ENCODE measurements at regions of chr7 and their contacts with region 1.

Region 1: DNA sequence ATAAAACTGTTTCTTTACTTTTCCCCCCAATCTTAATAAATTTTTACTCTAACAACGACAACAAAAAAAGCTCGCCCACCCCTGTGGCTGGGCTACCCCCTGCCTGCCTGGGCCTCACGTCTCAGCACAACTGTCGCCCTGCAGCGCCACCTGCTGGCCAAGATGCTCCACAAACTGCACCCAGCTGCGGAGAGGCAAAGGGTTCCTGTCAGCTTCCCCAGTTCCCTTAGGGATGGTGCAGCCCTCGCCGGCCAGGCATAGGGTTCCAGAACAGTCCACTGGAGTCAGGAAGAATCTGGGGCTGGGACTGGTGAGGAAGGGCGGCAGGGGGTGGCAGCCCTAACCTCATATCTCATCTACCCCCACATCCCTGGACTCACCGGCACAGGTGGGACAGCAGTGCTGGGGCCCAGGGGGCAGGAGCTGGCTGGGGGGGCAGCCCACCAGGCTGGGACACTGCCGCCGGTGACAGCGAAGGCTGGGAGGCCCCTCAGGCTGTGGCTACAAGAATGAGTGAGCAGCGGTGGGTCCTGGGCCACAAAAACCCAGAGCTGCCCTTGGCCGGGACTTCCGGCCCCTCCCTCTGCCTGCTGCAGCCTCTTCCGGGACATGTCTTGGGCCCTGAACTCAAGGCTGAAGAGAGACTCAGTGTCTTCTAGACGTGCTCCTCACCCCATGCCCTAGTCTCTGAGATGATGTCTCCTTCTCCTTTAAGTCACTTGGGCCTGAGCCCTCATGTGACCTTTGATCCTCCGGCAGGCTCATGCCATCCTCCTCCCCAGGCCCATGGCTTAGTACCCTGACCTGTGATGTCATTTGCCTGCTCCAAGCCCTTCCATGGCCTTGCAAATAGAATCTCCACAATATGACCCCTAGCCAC is 21.2 kb downstream of the ATP6V1F start:
- DNase-seq: peak; percentile 76 to 89 (median 84)
- H3K4me3 ChIP-seq: no peak overlapping the region
- H3K27ac ChIP-seq: no peak overlapping the region
- H3K4me1 ChIP-seq: peaks cover 0 to 5% (median 4%) of the 10 kb centered on the region in 4 experiments
- H3K27me3 ChIP-seq: peaks cover 0 to 8% (median 4%) of the 10 kb centered on the region in 5 experiments

Region 2: DNA sequence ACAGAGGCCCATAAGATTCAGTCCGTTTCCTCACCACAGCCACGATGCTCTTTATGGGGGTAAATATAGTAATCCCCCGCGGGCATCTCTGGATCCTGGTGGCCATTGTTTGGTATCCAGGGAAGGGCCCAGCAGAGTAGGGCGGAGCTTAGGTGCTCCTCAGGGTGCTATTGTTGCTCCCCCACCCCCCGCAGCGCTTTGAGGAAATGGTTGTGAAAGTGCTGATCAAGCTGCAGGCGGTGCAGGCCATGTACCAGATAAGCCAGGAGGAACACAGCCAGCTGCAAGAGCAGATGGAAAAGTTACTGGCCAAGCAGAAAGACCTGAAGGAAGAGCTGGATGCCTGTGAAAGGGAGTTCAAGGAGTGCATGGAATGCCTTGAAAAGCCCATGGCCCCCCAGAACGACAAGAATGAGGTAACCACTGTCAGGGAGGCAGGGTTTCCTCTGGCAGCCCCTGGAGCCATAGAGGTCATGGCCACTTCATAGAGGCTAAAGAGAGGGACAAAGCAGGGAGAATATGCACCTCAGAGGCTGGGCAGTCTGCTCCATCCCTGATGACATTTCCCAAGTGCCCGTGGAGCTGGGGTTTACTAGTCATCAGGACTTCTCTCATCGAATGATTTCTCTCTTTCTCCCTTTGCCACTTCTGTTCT is 71.2 kb before region 1 on chr7:
- CTCF ChIA-PET with region 1: interaction called, 11 read pairs
- POLR2A ChIA-PET with region 1: no interaction called
- DNase-seq: peak in 2 of 3 donors; percentile 39 to 47
- H3K4me3 ChIP-seq: no peak overlapping the region
- H3K27ac ChIP-seq: no peak overlapping the region
- H3K4me1 ChIP-seq: peaks cover 0 to 11% (median 4%) of the 10 kb centered on the region in 4 experiments
- H3K27me3 ChIP-seq: no peaks in the 10 kb centered on the region

Region 3: DNA sequence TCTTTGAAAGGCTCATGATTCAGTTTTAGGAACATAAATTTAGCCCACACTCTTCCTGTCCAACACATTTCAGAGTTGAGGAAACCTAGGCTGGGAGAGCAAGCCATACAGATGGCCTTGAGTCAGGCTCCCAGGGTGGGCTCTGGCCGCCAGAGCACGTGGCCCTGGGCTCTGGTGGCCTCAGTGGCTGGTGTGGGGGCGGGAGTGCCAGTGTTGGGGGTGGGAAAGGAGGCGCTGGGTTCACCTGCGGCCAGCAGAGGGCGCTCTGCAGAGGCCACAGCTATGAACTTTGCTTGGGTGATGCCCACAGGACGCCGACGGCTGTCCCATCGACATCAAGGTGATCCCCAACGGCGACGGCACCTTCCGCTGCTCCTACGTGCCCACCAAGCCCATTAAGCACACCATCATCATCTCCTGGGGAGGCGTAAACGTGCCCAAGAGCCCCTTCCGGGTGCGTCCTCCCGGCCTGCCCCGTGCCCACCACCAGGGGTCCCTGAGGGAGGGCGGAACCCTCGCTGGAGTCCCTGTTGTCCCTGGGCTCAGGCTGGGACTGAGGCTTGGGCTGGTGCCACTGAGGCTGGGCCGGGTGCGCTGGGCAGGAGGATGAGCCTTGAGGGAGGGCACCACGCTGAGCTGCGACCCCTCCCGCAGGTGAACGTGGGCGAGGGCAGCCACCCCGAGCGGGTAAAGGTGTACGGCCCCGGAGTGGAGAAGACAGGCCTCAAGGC is 41.8 kb before region 1 on chr7:
- CTCF ChIA-PET with region 1: interaction called, 83 read pairs
- POLR2A ChIA-PET with region 1: no interaction called
- DNase-seq: peak; percentile 56 to 70 (median 66)
- H3K4me3 ChIP-seq: peak overlapping the region in 2 of 7 experiments; percentile 26 to 75
- H3K27ac ChIP-seq: no peak overlapping the region
- H3K4me1 ChIP-seq: peaks cover 0 to 6% (median 2%) of the 10 kb centered on the region in 4 experiments
- H3K27me3 ChIP-seq: no peaks in the 10 kb centered on the region

Region 4: GRCh38 chr7:128862571-128863432 is 21.1 kb before region 1 on chr7 and contains the start of gene ATP6V1F:
- CTCF ChIA-PET with region 1: interaction called, 123 read pairs
- POLR2A ChIA-PET with region 1: no interaction called
- DNase-seq: peak; percentile 96 to 98 (median 97)
- H3K4me3 ChIP-seq: peak within 1 kb of the TSS; percentile 61 to 95 (median 93)
- H3K27ac ChIP-seq: peak within 1 kb of the TSS; percentile 85 to 92
- H3K4me1 ChIP-seq: peaks cover 3 to 39% (median 36%) of the 10 kb centered on the region in 4 experiments
- H3K27me3 ChIP-seq: no peaks in the 10 kb centered on the region

Region 5: GRCh38 chr7:128869138-128869943 is 14.5 kb before region 1 on chr7:
- CTCF ChIA-PET with region 1: interaction called, 123 read pairs
- POLR2A ChIA-PET with region 1: no interaction called
- DNase-seq: peak in 2 of 3 donors; percentile 69 to 79
- H3K4me3 ChIP-seq: peak overlapping the region; percentile 46 to 80 (median 56)
- H3K27ac ChIP-seq: no peak overlapping the region
- H3K4me1 ChIP-seq: peaks cover 0 to 22% (median 20%) of the 10 kb centered on the region in 4 experiments
- H3K27me3 ChIP-seq: peaks cover 0 to 13% (median 2%) of the 10 kb centered on the region in 5 experiments

Measured in common myeloid progenitor, CD34-positive (primary cell).